GM10248 (cell line): ENCODE measurements at regions of chr19 and their contacts with region 1.

Region 1: DNA sequence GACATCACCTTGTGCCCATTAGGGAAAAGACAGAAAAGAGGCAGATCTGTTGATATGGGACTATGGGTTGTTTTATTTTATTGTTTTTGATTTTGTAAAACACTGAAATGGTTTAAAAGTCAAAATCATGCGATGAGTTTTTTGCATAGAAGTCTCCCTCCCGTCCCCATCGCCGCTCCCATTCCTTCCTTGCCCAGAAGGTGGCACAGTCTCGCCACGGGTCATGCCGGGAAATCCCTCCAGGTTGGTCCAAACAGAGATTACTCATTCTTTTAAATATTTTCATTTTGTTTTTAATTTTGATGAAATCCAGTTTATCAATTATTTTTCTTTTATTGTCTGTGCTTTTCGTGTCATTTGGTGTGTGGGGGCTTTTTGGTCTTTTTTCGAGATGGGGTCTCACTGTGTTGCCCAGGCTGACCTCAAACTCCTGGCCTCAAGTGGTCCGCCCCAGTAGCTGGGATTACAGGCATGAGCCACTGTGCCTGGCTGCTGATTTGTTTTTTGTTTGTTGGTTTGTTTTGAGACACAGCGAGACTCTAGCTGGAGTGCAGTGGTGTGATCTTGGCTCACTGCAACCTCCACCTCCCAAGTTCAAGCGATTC is 9.2 kb downstream of the PGPEP1 start:
- DNase-seq: peak; percentile 68
- CTCF ChIP-seq: peak; percentile 67

Region 2: GRCh38 chr19:18291590-18292461 is 57.8 kb before region 1 on chr19:
- CTCF ChIA-PET with region 1: no interaction called
- POLR2A ChIA-PET with region 1: no interaction called
- DNase-seq: peak; percentile 91
- CTCF ChIP-seq: no peak

Region 3: DNA sequence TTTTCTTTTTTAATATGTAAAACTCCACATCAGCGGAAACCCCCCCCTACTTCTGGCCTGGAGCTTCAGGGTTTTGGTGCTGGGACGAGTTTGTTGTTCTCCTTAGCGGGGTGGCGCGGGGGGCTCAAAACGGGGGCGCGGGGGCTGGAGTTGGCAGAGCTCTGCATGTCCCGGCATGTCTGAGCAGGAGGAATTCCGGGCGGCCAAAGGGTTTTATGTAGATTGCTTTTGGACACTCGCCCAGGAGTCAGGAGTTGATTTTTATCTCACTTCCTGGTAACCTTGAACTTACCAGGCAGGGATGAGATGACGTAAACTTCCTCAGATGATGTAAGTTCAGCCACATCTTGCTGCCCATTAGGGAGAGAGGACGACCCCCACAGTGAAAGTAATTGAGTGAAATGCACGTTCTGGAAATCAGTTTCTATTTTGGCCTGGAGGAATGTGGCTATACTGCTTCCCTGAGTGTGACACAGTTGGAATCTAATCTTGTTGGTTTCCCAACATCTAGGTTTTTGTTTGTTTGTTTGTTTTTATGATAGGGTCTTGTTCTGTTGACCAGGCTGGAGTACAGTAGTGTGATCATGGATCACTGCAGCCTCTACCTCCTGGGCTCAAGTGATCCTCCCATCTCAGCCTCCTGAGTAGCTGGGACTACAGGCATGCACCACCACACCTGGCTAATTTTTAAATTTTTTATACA is 15.4 kb after region 1 on chr19:
- CTCF ChIA-PET with region 1: interaction called, 20 read pairs
- POLR2A ChIA-PET with region 1: no interaction called
- DNase-seq: no peak
- CTCF ChIP-seq: no peak

Region 4: GRCh38 chr19:18419195-18419698 is 69.6 kb after region 1 on chr19 and contains the start of gene SSBP4:
- CTCF ChIA-PET with region 1: interaction called, 27 read pairs
- POLR2A ChIA-PET with region 1: interaction called, 4 read pairs
- DNase-seq: peak; percentile 91
- CTCF ChIP-seq: peak; percentile 30

Region 5: DNA sequence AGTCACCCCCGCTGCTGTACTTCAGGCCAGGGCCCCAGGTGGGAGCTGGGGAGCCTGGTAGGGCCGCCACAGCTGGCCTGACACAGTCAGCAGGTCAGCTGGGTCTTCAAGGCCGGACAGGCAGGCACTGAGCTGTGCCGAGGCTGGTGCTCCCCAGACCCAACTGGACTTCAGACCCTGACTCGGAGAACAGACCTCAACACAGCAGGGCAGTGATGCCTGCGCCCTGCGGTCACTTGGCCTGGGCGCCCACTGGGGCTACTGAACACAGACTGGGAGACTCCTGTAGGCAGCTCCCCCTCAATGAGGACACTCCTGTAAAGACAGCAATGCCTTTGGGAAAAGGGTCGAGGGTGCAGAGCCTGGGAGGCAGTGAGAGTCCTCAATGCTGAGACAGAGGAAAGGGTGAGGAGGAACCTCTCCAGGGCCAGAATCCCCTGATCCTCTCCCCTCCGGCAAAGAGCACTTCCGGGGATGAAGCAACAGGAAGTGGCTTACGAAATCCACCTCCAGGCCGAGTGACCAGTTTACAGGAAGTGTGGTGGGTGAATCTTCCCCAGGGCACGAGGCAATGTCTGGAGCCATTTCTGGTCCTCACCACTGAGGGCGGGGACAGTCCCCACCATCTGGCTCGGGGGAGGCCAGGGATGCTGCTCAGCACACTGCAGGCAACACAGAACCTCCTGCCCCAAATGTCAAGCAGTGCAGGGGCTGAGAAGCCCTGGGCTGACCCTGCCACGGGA is 129.1 kb after region 1 on chr19:
- CTCF ChIA-PET with region 1: no interaction called
- POLR2A ChIA-PET with region 1: no interaction called
- DNase-seq: peak; percentile 90
- CTCF ChIP-seq: no peak

Region 6: GRCh38 chr19:18503971-18504885 is 154.6 kb after region 1 on chr19:
- CTCF ChIA-PET with region 1: no interaction called
- POLR2A ChIA-PET with region 1: no interaction called
- DNase-seq: peak; percentile 74
- CTCF ChIP-seq: no peak